Cardiac septum (tissue), 1 donor: ENCODE measurements at regions of chr4 and their contacts with region 1.

Region 1: GRCh38 chr4:9898596-9899305 is 117.3 kb downstream of the DRD5 start:
- DNase-seq: no peak

Region 2: GRCh38 chr4:9762823-9763475 is 135.8 kb before region 1 on chr4:
- intact Hi-C with region 1: loop called (anchors 2 kb)
- DNase-seq: no peak

Region 3: DNA sequence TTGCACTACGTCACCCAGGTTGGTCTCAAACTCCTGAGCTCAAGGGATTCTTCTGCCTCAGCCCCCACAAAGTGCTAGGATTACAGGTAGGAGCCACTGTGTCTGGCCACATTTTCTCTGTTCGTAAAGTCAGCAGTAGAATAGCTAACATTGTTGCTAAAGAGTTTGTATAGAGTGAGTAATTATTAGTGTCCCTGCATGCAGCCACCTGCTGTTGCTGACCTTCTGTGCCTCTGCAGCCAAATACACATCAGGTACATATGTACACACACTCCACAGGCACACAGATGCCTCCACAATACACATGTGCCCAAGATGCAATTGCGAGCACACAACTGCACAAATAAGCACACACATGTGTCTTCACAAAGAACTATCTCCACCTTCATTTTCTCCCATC is 106.4 kb before region 1 on chr4:
- intact Hi-C with region 1: no loop called
- DNase-seq: no peak

Region 4: GRCh38 chr4:9880406-9881197 is 18.1 kb before region 1 on chr4:
- intact Hi-C with region 1: no loop called
- DNase-seq: no peak